Sciatic nerve (tissue), 2 donors: ENCODE measurements at regions of chrX and their contacts with region 1.

Region 1: DNA sequence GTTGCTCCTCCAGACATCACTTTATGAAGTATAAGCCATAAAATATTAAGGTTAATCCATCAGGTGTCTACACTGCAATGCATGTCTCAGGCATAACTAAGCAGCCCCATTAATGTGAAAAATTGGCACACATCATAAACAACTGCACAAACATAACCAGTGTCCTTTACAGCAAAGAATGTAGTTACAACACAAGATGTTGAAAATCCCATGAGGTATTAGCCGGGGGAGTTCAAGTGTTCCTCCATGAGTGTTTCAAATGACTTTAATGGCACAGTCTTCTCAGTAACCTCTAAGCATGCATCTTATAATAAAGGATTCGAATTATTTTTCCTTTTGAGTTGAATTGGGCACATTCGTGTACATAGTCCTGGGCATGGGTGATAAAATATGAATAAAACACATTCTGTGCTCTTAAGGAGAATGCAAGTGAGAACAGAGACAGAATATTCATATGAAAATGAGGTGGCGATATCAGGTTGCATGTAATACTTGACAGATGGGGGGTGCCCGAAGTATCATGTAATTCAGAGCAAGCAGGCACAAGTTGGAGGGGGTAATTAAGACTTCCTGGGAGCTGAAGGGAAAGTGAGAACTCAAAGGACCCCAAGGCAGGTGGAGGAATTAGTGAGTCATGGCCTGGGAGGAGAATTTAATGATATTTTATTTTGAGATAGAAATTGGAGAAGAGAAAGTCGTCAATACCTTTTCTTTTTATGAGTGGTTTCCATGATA is 18.2 kb upstream of the VCX2 start:
- DNase-seq: no peak
- ATAC-seq: no peak

Region 2: DNA sequence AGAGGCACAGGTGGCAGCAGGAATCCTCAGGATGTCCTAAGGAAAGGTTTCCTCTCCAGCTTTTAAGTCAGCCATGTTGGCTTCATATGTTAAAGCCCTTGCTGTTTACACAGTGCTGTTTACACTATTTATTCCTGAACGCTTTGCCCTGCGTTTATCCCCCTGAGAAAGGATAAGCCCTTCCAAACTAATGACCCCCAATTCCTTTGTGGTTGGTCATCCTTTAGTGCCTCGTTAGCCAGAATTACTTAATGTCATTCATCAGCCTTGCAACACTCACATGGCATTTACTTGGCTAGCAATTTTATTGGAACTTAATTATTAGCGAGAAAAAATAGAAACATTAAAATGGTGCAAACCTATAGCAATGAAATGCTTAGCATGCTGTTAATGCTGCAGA is 42.0 kb before region 1 on chrX:
- intact Hi-C with region 1: no loop called
- DNase-seq: no peak
- ATAC-seq: no peak

Region 3: GRCh38 chrX:8374041-8374825 is 185.0 kb after region 1 on chrX:
- intact Hi-C with region 1: no loop called
- DNase-seq: no peak
- ATAC-seq: no peak

Region 4: GRCh38 chrX:8627796-8628195 is 438.5 kb after region 1 on chrX:
- intact Hi-C with region 1: loop called (anchors 5 kb)
- DNase-seq: no peak
- ATAC-seq: no peak